ENCODE measurements at regions of chr2 and their contacts with region 1.

Region 1: GRCh38 chr2:21042958-21043743 is 722 bp downstream of the APOB start:
- DNase-seq: peak; percentile 44 to 82 (median 64)
- H3K4me3 ChIP-seq: peak overlapping the region in 57 of 59 donors; percentile 10 to 65 (median 42)
- H3K27ac ChIP-seq: peak overlapping the region in 1 of 59 donors; percentile 44
- H3K27me3 ChIP-seq: peaks cover 0 to 9% (median 0%) of the 10 kb centered on the region in 45 donors
- CTCF ChIP-seq: peak; percentile 86 to 100 (median 99)

Region 2: DNA sequence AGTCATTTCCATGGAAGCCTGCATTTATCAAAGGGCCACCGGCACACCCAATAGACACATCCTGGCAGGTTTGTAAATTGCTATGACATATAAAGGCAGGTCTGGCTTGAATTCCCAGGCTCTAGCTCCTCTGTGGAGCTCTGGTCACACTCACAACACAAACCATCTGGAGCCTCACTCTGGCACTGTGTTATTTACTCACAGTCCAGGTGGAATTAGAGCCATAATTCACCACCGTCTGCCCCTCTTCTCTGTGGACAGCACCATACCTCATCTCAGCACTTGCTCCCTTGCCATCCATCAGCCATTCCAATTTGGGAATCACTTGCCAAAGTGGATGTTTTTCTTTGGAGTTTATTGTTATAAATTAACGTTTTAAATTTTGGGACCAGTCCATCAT is 1600.4 kb before region 1 on chr2:
- intact Hi-C with region 1: no loop called
- DNase-seq: no peak
- H3K4me3 ChIP-seq: no peak overlapping the region
- H3K27ac ChIP-seq: no peak overlapping the region
- H3K27me3 ChIP-seq: peaks cover 0 to 3% (median 0%) of the 10 kb centered on the region in 45 donors
- CTCF ChIP-seq: no peak

Region 3: GRCh38 chr2:21103274-21103891 is 60.2 kb after region 1 on chr2:
- intact Hi-C with region 1: no loop called
- DNase-seq: no peak
- H3K4me3 ChIP-seq: no peak overlapping the region
- H3K27ac ChIP-seq: no peak overlapping the region
- H3K27me3 ChIP-seq: peaks cover 0 to 7% (median 0%) of the 10 kb centered on the region in 45 donors
- CTCF ChIP-seq: no peak

Region 4: GRCh38 chr2:21118302-21118920 is 75.3 kb after region 1 on chr2:
- intact Hi-C with region 1: loop called (anchors 2 to 5 kb)
- DNase-seq: peak in 3 of 10 donors; percentile 6 to 59 (median 47)
- H3K4me3 ChIP-seq: no peak overlapping the region
- H3K27ac ChIP-seq: no peak overlapping the region
- H3K27me3 ChIP-seq: peaks cover 0 to 34% (median 3%) of the 10 kb centered on the region in 45 donors
- CTCF ChIP-seq: peak in 55 of 56 donors; percentile 40 to 82 (median 62)

Region 5: GRCh38 chr2:21165350-21165749 is 122.2 kb after region 1 on chr2:
- intact Hi-C with region 1: loop called in 1 of 2 experiments (anchors 10 kb)
- DNase-seq: no peak
- H3K4me3 ChIP-seq: no peak overlapping the region
- H3K27ac ChIP-seq: no peak overlapping the region
- H3K27me3 ChIP-seq: peaks cover 0 to 3% (median 0%) of the 10 kb centered on the region in 45 donors
- CTCF ChIP-seq: peak in 36 of 56 donors; percentile 9 to 48 (median 26)